Dorsolateral prefrontal cortex (tissue), 120 donors: ENCODE measurements at regions of chr9 and their contacts with region 1.

Region 1: GRCh38 chr9:7394007-7394774 is 405.4 kb downstream of the DMAC1 start:
- DNase-seq: peak in 3 of 10 donors; percentile 44 to 48 (median 44)
- H3K4me3 ChIP-seq: peak overlapping the region in 1 of 59 donors; percentile 0
- H3K27ac ChIP-seq: no peak overlapping the region
- H3K27me3 ChIP-seq: no peaks in the 10 kb centered on the region
- CTCF ChIP-seq: peak in 30 of 56 donors; percentile 10 to 60 (median 35)

Region 2: DNA sequence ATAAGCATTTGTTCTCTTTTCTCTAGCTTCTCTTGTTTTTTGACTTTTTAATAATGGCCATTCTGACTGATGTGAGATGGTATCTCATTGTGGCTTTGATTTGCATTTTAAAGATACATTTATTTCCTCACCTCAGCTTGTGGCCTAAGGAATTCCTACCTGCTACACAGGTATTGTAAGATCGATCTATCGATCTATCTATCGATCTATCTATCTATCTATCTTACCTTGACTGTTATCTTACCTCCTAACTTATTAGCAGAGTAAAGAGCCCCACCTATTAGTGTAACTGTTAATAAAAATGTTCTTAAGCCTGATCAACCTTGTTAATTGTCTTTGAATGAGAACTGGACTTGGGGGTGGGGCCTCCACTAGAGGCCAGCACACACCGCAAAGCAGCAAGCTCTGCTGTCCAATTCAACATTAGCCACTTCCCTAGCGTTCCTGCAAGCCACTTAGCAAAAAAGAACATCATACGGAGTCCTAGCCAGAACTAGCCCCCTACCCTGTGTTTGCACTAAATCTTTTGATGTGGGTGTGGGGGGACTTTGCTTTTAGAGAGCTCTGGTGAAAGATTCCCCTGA is 120.7 kb before region 1 on chr9:
- intact Hi-C with region 1: loop called in 1 of 2 experiments (anchors 10 kb)
- DNase-seq: peak in 6 of 10 donors; percentile 30 to 52 (median 42)
- H3K4me3 ChIP-seq: no peak overlapping the region
- H3K27ac ChIP-seq: no peak overlapping the region
- H3K27me3 ChIP-seq: no peaks in the 10 kb centered on the region
- CTCF ChIP-seq: peak in 55 of 56 donors; percentile 12 to 84 (median 65)